Mammary epithelial cell (primary cell): ENCODE measurements at regions of chr21 and their contacts with region 1.

Region 1: GRCh38 chr21:29499734-29500343 is 201.1 kb downstream of the BACH1 start:
- DNase-seq: peak; percentile 51
- H3K4me3 ChIP-seq: no peak overlapping the region
- H3K27ac ChIP-seq: no peak overlapping the region
- H3K4me1 ChIP-seq: no peaks in the 10 kb centered on the region
- H3K27me3 ChIP-seq: no peaks in the 10 kb centered on the region
- CTCF ChIP-seq: peak; percentile 67 to 78

Region 2: DNA sequence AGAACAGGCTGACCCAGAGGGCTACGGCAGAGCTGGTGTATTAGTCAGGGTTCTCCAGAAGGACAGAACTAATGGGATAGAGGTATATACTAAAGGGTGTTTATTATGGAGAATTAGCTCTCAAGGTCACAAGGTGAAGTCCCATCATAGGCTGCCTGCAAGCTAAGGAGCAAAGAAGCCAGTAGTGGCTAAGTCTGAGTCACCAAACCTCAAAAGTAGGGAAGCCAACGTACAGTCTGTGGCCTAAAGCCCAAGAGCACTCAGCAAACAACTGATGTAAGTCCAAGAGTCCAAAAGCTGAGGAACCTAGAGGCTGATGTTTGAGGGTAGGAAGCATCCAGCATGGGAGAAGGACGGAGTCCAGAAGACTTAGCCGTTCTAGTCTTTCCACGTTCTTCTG is 21.9 kb before region 1 on chr21:
- CTCF ChIA-PET with region 1: interaction called, 4 read pairs
- dilution Hi-C with region 1: no loop called
- in situ Hi-C with region 1: no loop called
- intact Hi-C with region 1: loop called (anchors 1 kb)
- DNase-seq: peak; percentile 15
- H3K4me3 ChIP-seq: no peak overlapping the region
- H3K27ac ChIP-seq: no peak overlapping the region
- H3K4me1 ChIP-seq: peaks cover 14% of the 10 kb centered on the region
- H3K27me3 ChIP-seq: no peaks in the 10 kb centered on the region
- CTCF ChIP-seq: no peak

Region 3: DNA sequence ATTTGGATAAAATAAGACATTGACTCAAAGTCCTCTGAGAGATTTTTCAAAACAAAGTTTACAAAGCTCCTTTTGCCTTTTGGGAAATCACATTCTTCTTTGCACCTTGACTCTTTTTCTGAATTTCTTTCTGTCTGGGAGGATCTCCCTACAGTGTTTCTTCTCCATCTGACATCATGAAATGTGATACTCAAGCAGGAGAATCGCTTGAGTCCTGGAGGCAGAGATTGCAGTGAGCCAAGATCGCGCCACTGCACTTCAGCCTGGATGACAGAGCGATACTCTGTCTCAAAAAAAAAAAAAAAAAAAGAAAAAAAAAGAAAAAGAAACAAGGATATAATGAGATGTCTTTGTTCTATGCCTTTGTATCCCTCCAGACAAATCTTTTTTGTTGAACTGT is 453.2 kb after region 1 on chr21:
- CTCF ChIA-PET with region 1: no interaction called
- dilution Hi-C with region 1: no loop called
- in situ Hi-C with region 1: no loop called
- intact Hi-C with region 1: no loop called
- DNase-seq: no peak
- H3K4me3 ChIP-seq: no peak overlapping the region
- H3K27ac ChIP-seq: no peak overlapping the region
- H3K4me1 ChIP-seq: no peaks in the 10 kb centered on the region
- H3K27me3 ChIP-seq: peaks cover 7% of the 10 kb centered on the region
- CTCF ChIP-seq: no peak